ENCODE measurements at regions of chr11 and their contacts with region 1.

Region 1: DNA sequence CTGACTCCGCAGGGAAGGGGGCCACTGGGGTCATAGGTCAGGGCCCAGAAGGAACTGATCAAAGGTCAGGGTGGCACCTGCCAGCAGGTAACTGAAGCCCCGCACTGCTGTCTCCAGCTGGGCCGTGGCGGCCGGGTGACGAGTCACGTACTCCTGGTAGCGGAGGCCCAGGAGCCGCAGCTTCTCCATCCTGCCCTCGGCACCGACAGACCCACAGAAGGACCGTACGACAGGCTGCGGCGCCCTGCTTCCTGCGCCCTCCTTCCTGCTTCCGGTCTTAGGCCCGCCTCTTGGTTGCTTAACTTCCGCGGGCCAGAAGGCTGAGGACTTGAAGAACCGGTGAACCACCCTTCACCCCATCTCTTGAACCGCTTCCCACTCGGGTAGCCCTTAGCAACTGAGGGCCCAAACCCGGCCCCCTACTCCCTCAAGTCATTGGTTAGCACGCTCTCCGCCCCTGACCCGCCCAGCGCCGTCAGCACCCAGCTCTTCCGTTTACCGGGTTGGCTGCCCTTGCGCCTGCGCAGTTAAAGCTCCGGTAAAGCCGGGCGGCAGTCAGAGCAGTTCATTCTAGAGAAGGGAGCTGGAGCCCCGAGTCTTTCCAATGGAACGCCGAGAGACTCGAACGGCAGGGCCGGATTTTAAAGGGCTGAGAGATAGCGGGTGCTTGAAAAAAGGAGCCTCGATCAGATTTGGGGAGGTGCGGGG is at the start of gene PEX16:
- DNase-seq: peak; percentile 94 to 99 (median 99)
- H3K4me3 ChIP-seq: peak within 1 kb of the TSS; percentile 88 to 91
- H3K4me3 Mint-ChIP-seq: peak within 1 kb of the TSS; percentile 91 to 98 (median 96)
- H3K27ac ChIP-seq: peak within 1 kb of the TSS; percentile 89
- H3K27ac Mint-ChIP-seq: peak within 1 kb of the TSS; percentile 95 to 100 (median 99)
- H3K4me1 ChIP-seq: peaks cover 50% of the 10 kb centered on the region
- H3K4me1 Mint-ChIP-seq: peaks cover 24 to 67% (median 47%) of the 10 kb centered on the region in 4 donors
- H3K27me3 ChIP-seq: no peaks in the 10 kb centered on the region
- H3K27me3 Mint-ChIP-seq: no peaks in the 10 kb centered on the region
- total RNA-seq, gene PEX16: 53.0 to 62.7 TPM

Region 2: GRCh38 chr11:45354976-45355705 is 562.6 kb before region 1 on chr11:
- CTCF ChIA-PET with region 1: no interaction called
- POLR2A ChIA-PET with region 1: no interaction called
- intact Hi-C with region 1: loop called (anchors 2 kb)
- DNase-seq: peak; percentile 86 to 88 (median 87)
- H3K4me3 ChIP-seq: peak overlapping the region; percentile 68 to 80
- H3K4me3 Mint-ChIP-seq: peak overlapping the region; percentile 79 to 90 (median 85)
- H3K27ac ChIP-seq: peak overlapping the region; percentile 55
- H3K27ac Mint-ChIP-seq: peak overlapping the region; percentile 67 to 96 (median 89)
- H3K4me1 ChIP-seq: peaks cover 19% of the 10 kb centered on the region
- H3K4me1 Mint-ChIP-seq: peaks cover 15 to 17% (median 16%) of the 10 kb centered on the region in 4 donors
- H3K27me3 ChIP-seq: no peaks in the 10 kb centered on the region
- H3K27me3 Mint-ChIP-seq: peaks cover 0 to 9% of the 10 kb centered on the region in 2 donors

Region 3: GRCh38 chr11:45794169-45794568 is 123.6 kb before region 1 on chr11:
- CTCF ChIA-PET with region 1: no interaction called
- POLR2A ChIA-PET with region 1: no interaction called
- intact Hi-C with region 1: no loop called
- DNase-seq: no peak
- H3K4me3 ChIP-seq: no peak overlapping the region
- H3K4me3 Mint-ChIP-seq: no peak overlapping the region
- H3K27ac ChIP-seq: no peak overlapping the region
- H3K27ac Mint-ChIP-seq: peak overlapping the region in 1 of 7 donors; percentile 59
- H3K4me1 ChIP-seq: no peaks in the 10 kb centered on the region
- H3K4me1 Mint-ChIP-seq: no peaks in the 10 kb centered on the region
- H3K27me3 ChIP-seq: no peaks in the 10 kb centered on the region
- H3K27me3 Mint-ChIP-seq: peaks cover 2 to 8% of the 10 kb centered on the region in 2 donors

Region 4: DNA sequence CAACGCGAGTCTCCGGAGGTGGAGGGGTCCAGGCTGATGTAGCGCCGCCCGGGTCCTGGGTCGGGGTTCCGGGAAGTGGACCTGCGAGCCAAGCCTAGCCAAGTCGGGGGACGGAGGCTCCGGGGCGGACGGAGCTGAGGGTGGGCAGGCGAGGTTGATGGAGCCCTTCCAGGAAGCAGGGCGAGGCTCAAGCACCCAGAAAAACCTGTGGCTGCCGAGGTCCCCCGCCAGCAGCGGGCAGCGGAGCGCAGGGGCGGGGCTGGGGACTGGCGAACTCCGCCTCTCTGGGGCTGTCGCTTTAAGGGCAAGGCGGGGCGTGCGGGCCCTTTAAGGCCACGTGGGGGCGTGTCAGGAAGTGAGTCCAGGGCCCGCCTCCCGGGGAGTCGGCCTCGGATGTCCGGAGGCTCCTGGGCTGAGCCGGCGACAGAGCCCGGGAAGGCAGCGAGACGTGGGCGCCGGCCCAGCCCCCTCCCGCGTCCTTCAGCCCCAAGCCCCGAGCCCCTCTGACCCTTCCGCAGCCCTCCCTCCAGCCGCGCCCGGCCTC is 112.9 kb before region 1 on chr11 and contains the start of gene SLC35C1:
- CTCF ChIA-PET with region 1: interaction called, 3 read pairs
- POLR2A ChIA-PET with region 1: interaction called, 14 read pairs
- intact Hi-C with region 1: loop called (anchors 1 kb)
- DNase-seq: peak; percentile 93 to 94 (median 93)
- H3K4me3 ChIP-seq: peak within 1 kb of the TSS; percentile 90 to 95
- H3K4me3 Mint-ChIP-seq: peak within 1 kb of the TSS; percentile 90 to 96 (median 92)
- H3K27ac ChIP-seq: peak within 1 kb of the TSS; percentile 83
- H3K27ac Mint-ChIP-seq: peak within 1 kb of the TSS; percentile 83 to 94 (median 92)
- H3K4me1 ChIP-seq: peaks cover 48% of the 10 kb centered on the region
- H3K4me1 Mint-ChIP-seq: peaks cover 30 to 64% (median 38%) of the 10 kb centered on the region in 4 donors
- H3K27me3 ChIP-seq: no peaks in the 10 kb centered on the region
- H3K27me3 Mint-ChIP-seq: no peaks in the 10 kb centered on the region
- total RNA-seq, gene SLC35C1: 20.3 to 21.5 TPM

Region 5: DNA sequence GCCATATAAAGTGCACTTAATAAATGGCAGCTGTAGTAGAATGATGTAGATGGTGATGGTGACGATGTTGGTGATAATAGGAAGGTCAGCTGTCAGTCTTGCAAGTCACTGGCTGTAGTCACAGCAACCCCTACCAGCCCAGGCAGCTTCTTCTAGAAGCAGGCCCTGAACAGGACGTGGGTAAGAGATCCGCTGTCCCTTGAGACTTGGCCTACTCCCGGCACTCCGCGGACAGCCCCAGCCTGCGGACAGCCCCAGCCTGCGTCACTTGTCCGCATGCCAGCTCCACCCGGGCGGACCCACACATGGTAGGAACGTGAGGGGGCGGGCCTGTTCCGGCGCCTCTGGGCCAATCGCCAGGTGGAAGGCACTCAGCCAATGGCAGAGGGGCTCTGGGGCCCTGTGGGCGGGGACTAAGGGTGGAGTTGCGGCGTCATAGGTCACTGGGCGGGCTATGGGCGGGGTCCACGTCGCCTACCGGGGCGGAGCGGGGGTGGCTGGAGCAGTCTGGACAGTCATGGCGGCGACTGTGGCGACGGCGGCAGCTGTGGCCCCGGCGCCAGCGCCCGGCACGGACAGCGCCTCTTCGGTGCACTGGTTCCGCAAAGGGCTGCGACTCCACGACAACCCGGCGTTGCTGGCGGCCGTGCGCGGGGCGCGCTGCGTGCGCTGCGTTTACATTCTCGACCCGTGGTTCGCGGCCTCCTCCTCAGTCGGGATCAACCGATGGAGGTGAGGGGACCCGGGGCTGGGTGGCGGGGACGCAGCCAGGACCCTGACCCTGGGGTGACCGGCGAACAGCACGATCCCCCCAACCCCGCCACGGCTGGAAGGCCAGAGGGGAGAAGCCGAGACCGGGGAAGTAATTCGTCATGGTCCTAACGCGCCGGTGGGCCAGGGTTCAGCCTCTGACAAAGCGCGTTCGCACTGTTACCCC is 70.5 kb before region 1 on chr11 and contains the start of gene CRY2:
- CTCF ChIA-PET with region 1: interaction called, 5 read pairs
- POLR2A ChIA-PET with region 1: interaction called, 32 read pairs
- intact Hi-C with region 1: loop called (anchors 1 kb)
- DNase-seq: peak; percentile 98
- H3K4me3 ChIP-seq: peak within 1 kb of the TSS; percentile 80 to 86
- H3K4me3 Mint-ChIP-seq: peak within 1 kb of the TSS; percentile 81 to 97 (median 87)
- H3K27ac ChIP-seq: peak within 1 kb of the TSS; percentile 96
- H3K27ac Mint-ChIP-seq: peak within 1 kb of the TSS; percentile 96 to 100 (median 97)
- H3K4me1 ChIP-seq: peaks cover 43% of the 10 kb centered on the region
- H3K4me1 Mint-ChIP-seq: peaks cover 27 to 68% (median 50%) of the 10 kb centered on the region in 4 donors
- H3K27me3 ChIP-seq: no peaks in the 10 kb centered on the region
- H3K27me3 Mint-ChIP-seq: no peaks in the 10 kb centered on the region
- total RNA-seq, gene CRY2: 66.0 to 67.4 TPM

Region 6: DNA sequence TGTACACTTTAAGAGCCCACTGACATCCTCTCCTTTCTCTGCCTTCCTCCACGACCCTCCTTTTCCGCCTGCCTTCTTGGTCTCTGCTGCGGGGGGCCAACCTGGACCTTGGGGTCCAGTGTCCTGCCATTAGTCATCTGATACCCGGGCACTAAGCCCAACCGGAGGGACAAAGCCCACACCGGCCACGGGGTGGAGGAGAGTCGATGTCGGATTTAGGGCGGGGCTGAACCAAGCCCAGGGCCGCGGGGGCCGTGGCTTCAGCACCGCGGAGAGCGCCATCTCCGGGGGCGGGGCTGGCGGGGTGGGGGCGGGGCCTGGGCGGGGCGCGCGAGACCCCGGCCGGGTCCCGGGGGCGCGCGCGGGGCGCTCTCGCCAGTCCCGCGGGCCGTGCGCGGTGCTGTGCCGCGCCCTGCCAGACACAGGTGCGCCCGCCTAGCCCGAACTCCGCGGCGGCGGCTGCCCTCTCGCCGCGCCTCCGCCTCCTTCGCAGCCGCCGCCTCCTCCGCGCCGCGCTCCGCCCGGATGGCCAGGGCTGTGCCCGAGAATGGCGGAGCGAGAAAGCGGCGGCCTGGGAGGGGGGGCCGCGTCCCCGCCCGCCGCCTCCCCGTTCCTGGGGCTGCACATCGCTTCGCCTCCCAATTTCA is 32.4 kb before region 1 on chr11 and contains the start of gene MAPK8IP1:
- CTCF ChIA-PET with region 1: no interaction called
- POLR2A ChIA-PET with region 1: interaction called, 5 read pairs
- intact Hi-C with region 1: loop called (anchors 2 kb)
- DNase-seq: peak; percentile 47 to 67 (median 58)
- H3K4me3 ChIP-seq: no peak within 1 kb of the TSS
- H3K4me3 Mint-ChIP-seq: peak within 1 kb of the TSS; percentile 69 to 84 (median 76)
- H3K27ac ChIP-seq: no peak within 1 kb of the TSS
- H3K27ac Mint-ChIP-seq: peak within 1 kb of the TSS in 6 of 7 donors; percentile 29 to 75 (median 52)
- H3K4me1 ChIP-seq: peaks cover 5% of the 10 kb centered on the region
- H3K4me1 Mint-ChIP-seq: peaks cover 8 to 16% (median 11%) of the 10 kb centered on the region in 4 donors
- H3K27me3 ChIP-seq: no peaks in the 10 kb centered on the region
- H3K27me3 Mint-ChIP-seq: peaks cover 0 to 4% of the 10 kb centered on the region in 2 donors
- total RNA-seq, gene MAPK8IP1: 0.73 to 0.86 TPM

Region 7: GRCh38 chr11:45930031-45930794 is 12.4 kb after region 1 on chr11:
- CTCF ChIA-PET with region 1: interaction called, 5 read pairs
- POLR2A ChIA-PET with region 1: interaction called, 77 read pairs
- intact Hi-C with region 1: no loop called
- DNase-seq: peak; percentile 50 to 72 (median 56)
- H3K4me3 ChIP-seq: peak overlapping the region in 1 of 2 donors; percentile 1
- H3K4me3 Mint-ChIP-seq: peak overlapping the region; percentile 59 to 88 (median 79)
- H3K27ac ChIP-seq: peak overlapping the region; percentile 41
- H3K27ac Mint-ChIP-seq: peak overlapping the region; percentile 78 to 98 (median 94)
- H3K4me1 ChIP-seq: peaks cover 42% of the 10 kb centered on the region
- H3K4me1 Mint-ChIP-seq: peaks cover 23 to 52% (median 38%) of the 10 kb centered on the region in 4 donors
- H3K27me3 ChIP-seq: no peaks in the 10 kb centered on the region
- H3K27me3 Mint-ChIP-seq: no peaks in the 10 kb centered on the region

Region 8: GRCh38 chr11:46121724-46122477 is 204.1 kb after region 1 on chr11:
- CTCF ChIA-PET with region 1: no interaction called
- POLR2A ChIA-PET with region 1: interaction called, 3 read pairs
- intact Hi-C with region 1: loop called (anchors 5 kb)
- DNase-seq: peak; percentile 82 to 86 (median 84)
- H3K4me3 ChIP-seq: peak overlapping the region; percentile 42 to 60
- H3K4me3 Mint-ChIP-seq: peak overlapping the region; percentile 86 to 94 (median 92)
- H3K27ac ChIP-seq: peak overlapping the region; percentile 60
- H3K27ac Mint-ChIP-seq: peak overlapping the region; percentile 87 to 98 (median 94)
- H3K4me1 ChIP-seq: peaks cover 35% of the 10 kb centered on the region
- H3K4me1 Mint-ChIP-seq: peaks cover 27 to 51% (median 34%) of the 10 kb centered on the region in 4 donors
- H3K27me3 ChIP-seq: no peaks in the 10 kb centered on the region
- H3K27me3 Mint-ChIP-seq: peaks cover 0 to 3% of the 10 kb centered on the region in 2 donors

Measured in CD4-positive, alpha-beta memory T cell (primary cell).